ENCODE measurements at regions of chr19 and their contacts with region 1.

Region 1: DNA sequence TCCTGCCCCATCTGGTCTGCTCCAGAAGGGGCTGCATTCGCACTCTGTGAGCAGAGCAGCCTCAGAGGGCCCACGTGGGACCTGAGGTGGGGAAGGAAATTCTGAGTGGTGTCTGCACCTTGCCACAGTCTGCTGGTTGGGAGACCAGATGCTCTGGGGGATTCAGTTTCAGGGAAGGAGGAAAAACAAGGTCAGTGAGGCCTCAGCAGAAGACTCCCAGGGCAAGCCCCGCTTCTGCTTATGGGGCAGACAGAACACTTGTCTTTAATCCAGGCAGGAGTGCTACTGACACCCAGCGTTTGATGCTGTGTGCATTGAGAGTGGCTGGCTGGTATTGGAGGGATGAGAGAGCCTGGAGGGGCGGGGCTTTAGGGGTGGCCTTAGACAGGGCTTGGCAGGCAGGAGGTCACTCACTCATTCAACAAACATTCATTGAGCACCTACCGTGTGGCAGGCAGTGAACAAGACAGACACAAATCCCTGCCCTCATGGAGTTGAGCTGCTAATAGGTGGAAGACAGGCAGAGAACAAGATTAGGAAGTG is 4.9 kb upstream of the CLEC17A start:
- DNase-seq: peak; percentile 53
- ATAC-seq: peak; percentile 69
- H3K4me3 ChIP-seq: no peak overlapping the region
- H3K27ac ChIP-seq: peak overlapping the region; percentile 41; the same call in 1 of the 2 replicates
- H3K4me1 ChIP-seq: peaks cover 26% of the 10 kb centered on the region
- H3K27me3 ChIP-seq: no peaks in the 10 kb centered on the region
- CTCF ChIP-seq: peak in 2 of 3 experiments; percentile 5 to 21; a peak in 1 of 6 replicates
- EP300 ChIP-seq: no peak
- POLR2A ChIP-seq: no peak
- RAD21 ChIP-seq: peak; percentile 13

Region 2: GRCh38 chr19:14603990-14604387 is 26.0 kb after region 1 on chr19:
- CTCF ChIA-PET with region 1: interaction called, 26 read pairs
- POLR2A ChIA-PET with region 1: interaction called, 11 read pairs
- RAD21 ChIA-PET with region 1: interaction called, 22 read pairs
- SMC1A ChIA-PET with region 1: interaction called, 23 read pairs
- in situ Hi-C with region 1: no loop called
- intact Hi-C with region 1: loop called (anchors 2 kb)
- DNase-seq: peak; percentile 84
- ATAC-seq: peak; percentile 97
- H3K4me3 ChIP-seq: 0 out of 2 replicates have a peak overlapping the region, but pooled peaks have one; percentile 17
- H3K27ac ChIP-seq: peak overlapping the region; percentile 89
- H3K4me1 ChIP-seq: peaks cover 36% of the 10 kb centered on the region
- H3K27me3 ChIP-seq: no peaks in the 10 kb centered on the region
- CTCF ChIP-seq: no peak
- EP300 ChIP-seq: peak in 1 of 2 experiments; percentile 53; a peak in 1 of 4 replicates
- POLR2A ChIP-seq: peak; percentile 38; the same call in 1 of the 2 replicates
- RAD21 ChIP-seq: no peak

Region 3: DNA sequence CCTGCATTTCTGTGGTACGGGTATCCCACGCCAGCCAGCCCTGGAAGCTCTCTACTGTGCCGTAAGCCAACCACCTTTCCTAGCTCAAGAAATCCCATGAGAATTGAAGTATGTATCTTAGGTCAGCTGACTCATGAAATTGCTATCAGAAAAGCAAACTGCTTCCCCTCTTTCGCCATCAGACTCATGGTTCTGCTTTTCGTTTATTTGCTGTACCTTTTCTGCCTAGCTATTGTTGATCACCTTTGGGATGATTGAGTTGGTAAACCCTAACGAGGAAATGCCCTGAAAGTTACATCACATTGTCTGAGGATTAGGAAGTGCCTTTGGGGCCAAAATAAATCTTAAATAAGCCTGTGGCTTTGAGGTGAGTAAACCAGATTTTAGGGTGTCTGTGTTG is 96.8 kb after region 1 on chr19 and contains the start of gene ADGRE3:
- CTCF ChIA-PET with region 1: interaction called, 25 read pairs
- POLR2A ChIA-PET with region 1: no interaction called
- RAD21 ChIA-PET with region 1: interaction called, 11 read pairs
- SMC1A ChIA-PET with region 1: interaction called, 13 read pairs
- in situ Hi-C with region 1: no loop called
- intact Hi-C with region 1: no loop called
- DNase-seq: no peak
- ATAC-seq: peak; percentile 46; the same call in 2 of the 3 replicates
- H3K4me3 ChIP-seq: no peak within 1 kb of the TSS
- H3K27ac ChIP-seq: no peak within 1 kb of the TSS
- H3K4me1 ChIP-seq: no peaks in the 10 kb centered on the region; the same call in 1 of the 2 replicates
- H3K27me3 ChIP-seq: no peaks in the 10 kb centered on the region
- CTCF ChIP-seq: no peak
- EP300 ChIP-seq: no peak
- POLR2A ChIP-seq: no peak
- RAD21 ChIP-seq: no peak
- polyA plus RNA-seq, gene ADGRE3: 0.04 to 0.05 TPM

Region 4: DNA sequence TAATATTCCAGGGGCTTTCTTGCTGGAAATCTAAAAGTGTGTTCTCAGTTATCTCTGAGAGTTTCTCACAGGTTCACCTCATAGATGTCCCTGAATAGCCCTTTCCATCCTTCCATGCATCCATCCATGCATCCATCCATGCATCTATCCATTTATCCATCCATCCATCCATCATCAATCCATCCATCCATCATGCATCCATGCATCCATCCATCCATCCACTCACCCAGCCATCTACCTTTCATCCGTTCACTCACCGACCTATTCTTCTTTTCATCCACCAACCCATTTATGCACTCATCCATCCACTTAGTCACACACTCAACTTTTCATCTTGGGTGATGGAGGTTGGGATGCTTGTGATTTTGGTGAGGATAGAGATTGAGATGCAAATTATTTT is 104.1 kb after region 1 on chr19:
- CTCF ChIA-PET with region 1: interaction called, 803 read pairs
- POLR2A ChIA-PET with region 1: interaction called, 190 read pairs
- RAD21 ChIA-PET with region 1: interaction called, 593 read pairs
- SMC1A ChIA-PET with region 1: interaction called, 558 read pairs
- in situ Hi-C with region 1: loop called (anchors 5 kb)
- intact Hi-C with region 1: loop called (anchors 1 kb)
- DNase-seq: no peak
- ATAC-seq: no peak
- H3K4me3 ChIP-seq: no peak overlapping the region
- H3K27ac ChIP-seq: no peak overlapping the region
- H3K4me1 ChIP-seq: no peaks in the 10 kb centered on the region
- H3K27me3 ChIP-seq: no peaks in the 10 kb centered on the region
- CTCF ChIP-seq: no peak
- EP300 ChIP-seq: no peak
- POLR2A ChIP-seq: no peak
- RAD21 ChIP-seq: no peak

Region 5: GRCh38 chr19:15663247-15663646 is 1085.3 kb after region 1 on chr19:
- CTCF ChIA-PET with region 1: no interaction called
- POLR2A ChIA-PET with region 1: no interaction called
- RAD21 ChIA-PET with region 1: no interaction called
- SMC1A ChIA-PET with region 1: no interaction called
- in situ Hi-C with region 1: no loop called
- intact Hi-C with region 1: no loop called
- DNase-seq: no peak
- ATAC-seq: no peak
- H3K4me3 ChIP-seq: no peak overlapping the region
- H3K27ac ChIP-seq: no peak overlapping the region
- H3K4me1 ChIP-seq: no peaks in the 10 kb centered on the region
- H3K27me3 ChIP-seq: no peaks in the 10 kb centered on the region
- CTCF ChIP-seq: no peak
- EP300 ChIP-seq: no peak
- POLR2A ChIP-seq: no peak
- RAD21 ChIP-seq: no peak